ENCODE measurements at regions of chr2 and their contacts with region 1.

Region 1: GRCh38 chr2:138373993-138374408 is 127.6 kb upstream of the SPOPL start:
- DNase-seq: peak; percentile 12 to 42 (median 23)
- ATAC-seq: peak; percentile 72
- H3K4me3 ChIP-seq: no peak overlapping the region
- H3K27ac ChIP-seq: no peak overlapping the region
- H3K4me1 ChIP-seq: no peaks in the 10 kb centered on the region
- H3K27me3 ChIP-seq: no peaks in the 10 kb centered on the region
- CTCF ChIP-seq: peak; percentile 52 to 69 (median 54); a peak in 5 of 6 replicates
- EP300 ChIP-seq: no peak
- POLR2A ChIP-seq: no peak
- RAD21 ChIP-seq: peak; percentile 57 to 67

Region 2: GRCh38 chr2:137910641-137911040 is 463.4 kb before region 1 on chr2:
- CTCF ChIA-PET with region 1: interaction called, 3 read pairs
- POLR2A ChIA-PET with region 1: no interaction called
- in situ Hi-C with region 1: no loop called
- intact Hi-C with region 1: loop called (anchors 2 kb)
- DNase-seq: peak in 2 of 4 experiments; percentile 7 to 21
- ATAC-seq: no peak
- H3K4me3 ChIP-seq: no peak overlapping the region
- H3K27ac ChIP-seq: no peak overlapping the region
- H3K4me1 ChIP-seq: no peaks in the 10 kb centered on the region
- H3K27me3 ChIP-seq: peaks cover 2 to 4% of the 10 kb centered on the region in 2 experiments; a peak in 1 of 5 replicates
- CTCF ChIP-seq: peak in 2 of 3 experiments; percentile 10 to 72; a peak in 4 of 6 replicates
- EP300 ChIP-seq: no peak
- POLR2A ChIP-seq: no peak
- RAD21 ChIP-seq: peak; percentile 72 to 81

Region 3: DNA sequence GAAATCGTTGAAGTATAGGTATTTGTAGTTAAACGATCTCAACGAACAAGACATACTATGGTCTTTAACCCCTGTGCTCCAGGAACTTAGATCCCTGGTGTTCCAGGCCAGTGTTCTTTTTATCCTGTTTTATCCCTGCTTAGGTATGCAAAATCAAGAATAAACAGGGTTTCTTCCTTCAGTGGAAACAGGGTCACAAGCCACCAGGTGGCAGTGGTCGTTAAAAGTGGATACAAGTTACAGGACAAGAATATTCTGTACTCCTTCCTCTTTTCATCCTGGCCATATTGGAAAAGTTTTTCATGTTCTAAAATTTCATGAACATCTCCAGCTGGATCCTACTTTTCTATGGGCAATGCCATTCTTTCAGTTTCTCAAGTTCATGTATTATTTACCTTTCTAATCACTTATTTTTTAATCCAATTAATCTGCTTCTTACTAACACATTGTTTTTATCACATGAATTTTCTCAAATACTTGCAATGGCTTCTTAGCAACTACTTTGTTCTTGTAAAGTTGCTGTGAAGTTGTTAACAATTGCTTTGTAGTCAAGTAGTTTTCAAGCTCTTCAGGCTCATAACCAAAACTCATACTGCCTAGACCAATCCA is 426.2 kb before region 1 on chr2:
- CTCF ChIA-PET with region 1: interaction called, 5 read pairs
- POLR2A ChIA-PET with region 1: no interaction called
- in situ Hi-C with region 1: no loop called
- intact Hi-C with region 1: loop called (anchors 10 kb)
- DNase-seq: peak; percentile 48 to 81 (median 58)
- ATAC-seq: peak; percentile 85
- H3K4me3 ChIP-seq: no peak overlapping the region
- H3K27ac ChIP-seq: no peak overlapping the region
- H3K4me1 ChIP-seq: peaks cover 4 to 19% of the 10 kb centered on the region in 2 experiments; a peak in 3 of 5 replicates
- H3K27me3 ChIP-seq: no peaks in the 10 kb centered on the region
- CTCF ChIP-seq: peak; percentile 67 to 85 (median 68)
- EP300 ChIP-seq: no peak
- POLR2A ChIP-seq: no peak
- RAD21 ChIP-seq: peak; percentile 93 to 97

Region 4: GRCh38 chr2:138060301-138060635 is 313.7 kb before region 1 on chr2:
- CTCF ChIA-PET with region 1: no interaction called
- POLR2A ChIA-PET with region 1: no interaction called
- in situ Hi-C with region 1: no loop called
- intact Hi-C with region 1: no loop called
- DNase-seq: peak; percentile 11 to 89 (median 33)
- ATAC-seq: peak; percentile 29
- H3K4me3 ChIP-seq: no peak overlapping the region
- H3K27ac ChIP-seq: no peak overlapping the region; the same call in 2 of the 3 replicates
- H3K4me1 ChIP-seq: peaks cover 6 to 30% of the 10 kb centered on the region in 2 experiments; a peak in 4 of 5 replicates
- H3K27me3 ChIP-seq: no peaks in the 10 kb centered on the region
- CTCF ChIP-seq: no peak
- EP300 ChIP-seq: peak; percentile 83; the same call in 1 of the 2 replicates
- POLR2A ChIP-seq: no peak
- RAD21 ChIP-seq: peak; percentile 7 to 13; a peak in 1 of 4 replicates

Region 5: GRCh38 chr2:139940686-139941085 is 1566.7 kb after region 1 on chr2:
- CTCF ChIA-PET with region 1: no interaction called
- POLR2A ChIA-PET with region 1: no interaction called
- in situ Hi-C with region 1: no loop called
- intact Hi-C with region 1: no loop called
- DNase-seq: no peak
- ATAC-seq: no peak
- H3K4me3 ChIP-seq: no peak overlapping the region
- H3K27ac ChIP-seq: no peak overlapping the region
- H3K4me1 ChIP-seq: no peaks in the 10 kb centered on the region
- H3K27me3 ChIP-seq: no peaks in the 10 kb centered on the region
- CTCF ChIP-seq: no peak
- EP300 ChIP-seq: no peak
- POLR2A ChIP-seq: no peak
- RAD21 ChIP-seq: no peak